ENCODE measurements at regions of chr7 and their contacts with region 1.

Region 1: GRCh38 chr7:82234457-82235049 is 209.0 kb downstream of the CACNA2D1 start:
- DNase-seq: no peak
- ATAC-seq: peak in 3 of 4 donors; percentile 25 to 62 (median 40)
- H3K4me3 ChIP-seq: no peak overlapping the region
- H3K27ac ChIP-seq: peak overlapping the region; percentile 38
- H3K4me1 ChIP-seq: peaks cover 29% of the 10 kb centered on the region
- H3K27me3 ChIP-seq: no peaks in the 10 kb centered on the region
- CTCF ChIP-seq: peak; percentile 62

Region 2: GRCh38 chr7:81903115-81903514 is 331.4 kb before region 1 on chr7:
- intact Hi-C with region 1: no loop called
- DNase-seq: no peak
- ATAC-seq: no peak
- H3K4me3 ChIP-seq: no peak overlapping the region
- H3K27ac ChIP-seq: no peak overlapping the region
- H3K4me1 ChIP-seq: no peaks in the 10 kb centered on the region
- H3K27me3 ChIP-seq: no peaks in the 10 kb centered on the region
- CTCF ChIP-seq: no peak

Region 3: DNA sequence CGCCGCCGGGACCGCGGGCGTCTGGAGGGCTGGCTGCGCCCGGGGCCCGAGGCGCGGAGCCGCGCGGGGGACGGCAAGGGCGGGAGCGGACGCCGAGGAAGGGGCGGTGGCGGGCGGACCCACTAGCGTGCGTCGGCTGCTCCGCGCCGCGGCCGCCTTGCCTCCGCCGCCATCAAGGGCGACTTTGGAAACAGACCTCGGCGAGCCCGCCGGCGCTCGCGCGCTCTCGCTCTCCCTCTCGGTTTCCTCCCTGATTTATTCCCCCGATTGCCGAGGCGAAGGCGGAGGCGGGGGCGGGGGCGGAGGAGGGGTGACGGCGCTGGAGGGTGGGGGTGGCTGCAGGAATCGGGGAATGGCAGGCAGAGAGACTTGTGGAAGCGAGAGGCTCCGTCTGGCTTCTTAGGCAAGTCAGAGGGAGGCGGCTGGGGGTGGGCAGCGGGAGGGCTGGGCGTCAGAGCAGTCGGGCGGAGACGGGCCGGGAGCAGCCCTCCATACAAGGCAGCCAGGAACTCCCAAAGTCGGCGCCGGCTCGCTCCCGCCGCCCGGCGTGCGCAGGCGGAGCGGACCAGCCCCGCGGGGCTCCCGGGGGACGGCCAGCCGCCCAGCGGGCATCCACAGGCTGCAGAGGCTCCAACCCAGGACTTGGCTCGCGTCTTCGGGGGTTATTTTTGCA is 209.1 kb after region 1 on chr7 and contains the start of gene CACNA2D1:
- intact Hi-C with region 1: loop called (anchors 10 kb)
- DNase-seq: peak; percentile 86 to 94
- ATAC-seq: peak; percentile 90 to 93 (median 90)
- H3K4me3 ChIP-seq: peak within 1 kb of the TSS; percentile 79
- H3K27ac ChIP-seq: peak within 1 kb of the TSS; percentile 99
- H3K4me1 ChIP-seq: peaks cover 31% of the 10 kb centered on the region
- H3K27me3 ChIP-seq: no peaks in the 10 kb centered on the region
- CTCF ChIP-seq: no peak
- total RNA-seq, gene CACNA2D1: 97.5 to 167 (median 127) TPM

Region 4: DNA sequence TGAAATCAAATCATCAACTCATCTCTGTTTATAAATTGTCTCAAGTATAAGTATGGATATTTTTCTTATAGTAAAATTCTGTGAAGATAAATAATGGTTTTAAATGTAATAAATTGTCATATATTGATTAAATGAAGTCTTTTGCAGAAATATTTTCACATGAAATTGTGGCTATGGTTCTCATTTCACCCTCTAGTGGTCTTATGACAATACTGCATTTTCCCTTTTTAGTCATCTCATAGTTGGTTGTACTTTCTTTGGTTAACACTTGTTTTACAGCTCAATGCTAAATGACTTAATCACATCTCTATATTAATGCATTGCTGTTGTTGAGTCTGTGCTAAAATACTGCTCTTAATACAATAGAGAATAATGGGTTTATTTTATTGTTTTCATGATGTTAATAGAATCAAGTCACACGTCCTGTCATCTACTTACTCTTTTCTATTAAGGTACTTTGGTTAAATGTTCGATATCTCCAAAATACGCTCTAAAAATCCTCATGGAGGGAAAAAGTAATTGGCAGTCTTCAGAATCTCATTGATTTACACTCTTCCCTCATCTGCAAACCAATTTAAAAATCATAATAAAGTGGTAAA is 247.0 kb after region 1 on chr7:
- intact Hi-C with region 1: loop called (anchors 5 to 10 kb)
- DNase-seq: no peak
- ATAC-seq: peak in 2 of 4 donors; percentile 58 to 71
- H3K4me3 ChIP-seq: no peak overlapping the region
- H3K27ac ChIP-seq: no peak overlapping the region
- H3K4me1 ChIP-seq: peaks cover 15% of the 10 kb centered on the region
- H3K27me3 ChIP-seq: no peaks in the 10 kb centered on the region
- CTCF ChIP-seq: peak; percentile 83

Region 5: DNA sequence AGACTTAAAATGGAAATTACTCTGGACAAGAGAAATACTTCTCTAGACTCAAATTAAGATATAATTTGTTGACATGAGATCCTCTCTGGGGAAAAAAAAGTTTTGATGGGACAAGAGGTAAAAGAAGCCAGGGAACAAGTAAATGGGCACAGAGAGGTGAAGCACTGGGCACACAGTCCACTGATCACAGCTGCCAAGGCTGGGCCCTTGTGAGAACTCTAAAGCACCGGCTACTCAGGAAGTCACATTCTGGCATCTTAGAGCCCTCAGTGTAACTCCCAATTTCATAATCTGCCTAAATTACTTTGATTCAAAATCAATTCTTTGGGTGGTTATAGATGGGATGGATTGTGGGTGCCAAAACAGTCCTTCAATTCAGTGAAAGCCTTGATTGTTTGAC is 332.2 kb after region 1 on chr7:
- intact Hi-C with region 1: loop called (anchors 5 to 10 kb)
- DNase-seq: peak in 1 of 2 donors; percentile 50
- ATAC-seq: no peak
- H3K4me3 ChIP-seq: no peak overlapping the region
- H3K27ac ChIP-seq: no peak overlapping the region
- H3K4me1 ChIP-seq: peaks cover 6% of the 10 kb centered on the region
- H3K27me3 ChIP-seq: no peaks in the 10 kb centered on the region
- CTCF ChIP-seq: no peak